MCF 10A (cell line): ENCODE measurements at regions of chr11 and their contacts with region 1.

Region 1: DNA sequence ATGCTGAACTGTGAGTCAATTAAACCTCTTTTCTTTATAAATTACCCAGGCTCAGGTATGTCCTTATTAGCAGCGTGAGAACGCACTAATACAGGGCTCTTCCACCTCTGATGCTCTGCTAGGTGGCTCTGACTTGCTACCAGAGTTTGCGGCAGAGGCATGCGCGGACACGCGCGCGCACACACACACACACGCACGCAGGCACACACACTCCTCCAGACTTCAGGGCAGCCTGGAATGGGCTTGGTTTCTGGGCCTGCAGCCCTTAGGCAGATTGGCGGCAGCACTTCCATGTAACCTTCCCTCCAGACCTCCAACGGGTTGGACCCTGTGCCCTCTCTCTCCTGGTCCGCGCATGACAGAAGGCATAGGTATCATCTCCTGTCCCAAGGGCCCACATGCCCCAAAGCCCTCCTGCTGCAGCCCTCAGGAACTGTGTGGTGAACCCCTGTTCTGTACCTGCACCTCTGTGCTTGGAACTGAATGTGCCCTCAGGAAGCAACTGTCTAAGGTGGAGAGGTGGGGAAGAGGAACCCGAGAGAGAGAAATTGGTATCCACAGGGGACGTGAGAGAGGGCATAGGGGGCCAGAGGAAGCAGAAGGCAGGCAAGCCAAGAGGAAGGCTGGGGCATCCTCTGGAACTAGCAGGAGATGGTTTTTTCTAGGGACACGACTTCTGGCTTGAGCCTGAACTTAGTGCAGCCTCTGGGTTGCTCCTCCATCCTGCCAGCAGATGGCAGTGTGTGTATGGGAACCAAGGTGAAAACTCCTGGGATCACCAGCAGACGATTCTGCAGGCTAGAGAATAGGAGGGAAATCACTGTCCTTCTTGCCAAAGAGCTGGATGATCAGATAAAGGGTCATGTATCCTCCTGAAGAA is 23.4 kb upstream of the RIC3 start:
- DNase-seq: peak; percentile 75
- H3K4me3 Mint-ChIP-seq: no peak overlapping the region
- H3K27ac Mint-ChIP-seq: no peak overlapping the region
- H3K4me1 Mint-ChIP-seq: no peaks in the 10 kb centered on the region
- H3K27me3 Mint-ChIP-seq: peaks cover 36% of the 10 kb centered on the region
- CTCF ChIP-seq: peak; percentile 84

Region 2: DNA sequence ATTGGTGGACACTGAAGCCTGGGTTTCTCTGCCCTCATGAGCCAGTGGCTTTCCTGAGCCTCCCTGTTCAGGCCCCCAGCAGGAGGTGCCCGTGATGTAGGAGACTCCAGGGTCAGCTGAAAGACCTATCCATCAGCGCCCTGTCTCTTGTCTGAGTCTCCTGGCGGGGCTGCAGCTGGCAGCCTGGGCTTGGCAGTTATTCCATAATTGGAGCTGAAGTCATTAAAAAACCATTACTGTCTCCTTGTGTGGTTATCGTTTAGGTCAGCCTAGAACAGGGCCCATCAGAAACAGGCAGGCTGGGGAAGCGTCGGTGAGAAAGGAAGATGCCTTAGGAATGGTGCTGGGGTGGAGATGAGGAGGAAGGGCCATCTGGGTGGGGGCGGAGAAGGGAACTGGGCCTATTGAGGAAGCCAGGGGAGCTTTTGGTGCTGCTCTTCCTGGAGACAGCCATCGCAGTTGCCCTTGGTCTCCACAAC is 106.2 kb before region 1 on chr11:
- CTCF ChIA-PET with region 1: no interaction called
- POLR2A ChIA-PET with region 1: no interaction called
- intact Hi-C with region 1: no loop called
- DNase-seq: no peak
- H3K4me3 Mint-ChIP-seq: no peak overlapping the region
- H3K27ac Mint-ChIP-seq: no peak overlapping the region
- H3K4me1 Mint-ChIP-seq: no peaks in the 10 kb centered on the region
- H3K27me3 Mint-ChIP-seq: peaks cover 10% of the 10 kb centered on the region
- CTCF ChIP-seq: no peak

Region 3: GRCh38 chr11:8178297-8178696 is 14.0 kb before region 1 on chr11:
- CTCF ChIA-PET with region 1: interaction called, 10 read pairs
- POLR2A ChIA-PET with region 1: interaction called, 3 read pairs
- intact Hi-C with region 1: no loop called
- DNase-seq: no peak
- H3K4me3 Mint-ChIP-seq: no peak overlapping the region
- H3K27ac Mint-ChIP-seq: no peak overlapping the region
- H3K4me1 Mint-ChIP-seq: no peaks in the 10 kb centered on the region
- H3K27me3 Mint-ChIP-seq: peaks cover 56% of the 10 kb centered on the region
- CTCF ChIP-seq: no peak

Region 4: GRCh38 chr11:8209208-8209807 is 17.1 kb after region 1 on chr11:
- CTCF ChIA-PET with region 1: interaction called, 101 read pairs
- POLR2A ChIA-PET with region 1: no interaction called
- intact Hi-C with region 1: no loop called
- DNase-seq: no peak
- H3K4me3 Mint-ChIP-seq: no peak overlapping the region
- H3K27ac Mint-ChIP-seq: no peak overlapping the region
- H3K4me1 Mint-ChIP-seq: no peaks in the 10 kb centered on the region
- H3K27me3 Mint-ChIP-seq: peaks cover 18% of the 10 kb centered on the region
- CTCF ChIP-seq: peak; percentile 36

Region 5: GRCh38 chr11:8219257-8220021 is 27.2 kb after region 1 on chr11:
- CTCF ChIA-PET with region 1: interaction called, 17 read pairs
- POLR2A ChIA-PET with region 1: no interaction called
- intact Hi-C with region 1: no loop called
- DNase-seq: peak; percentile 65
- H3K4me3 Mint-ChIP-seq: no peak overlapping the region
- H3K27ac Mint-ChIP-seq: no peak overlapping the region
- H3K4me1 Mint-ChIP-seq: no peaks in the 10 kb centered on the region
- H3K27me3 Mint-ChIP-seq: peaks cover 14% of the 10 kb centered on the region
- CTCF ChIP-seq: peak; percentile 72

Region 6: GRCh38 chr11:8225589-8226036 is 33.4 kb after region 1 on chr11:
- CTCF ChIA-PET with region 1: interaction called, 17 read pairs
- POLR2A ChIA-PET with region 1: no interaction called
- intact Hi-C with region 1: no loop called
- DNase-seq: peak; percentile 63
- H3K4me3 Mint-ChIP-seq: no peak overlapping the region
- H3K27ac Mint-ChIP-seq: no peak overlapping the region
- H3K4me1 Mint-ChIP-seq: peaks cover 20% of the 10 kb centered on the region
- H3K27me3 Mint-ChIP-seq: no peaks in the 10 kb centered on the region
- CTCF ChIP-seq: peak; percentile 94

Region 7: GRCh38 chr11:8566613-8567210 is 374.5 kb after region 1 on chr11:
- CTCF ChIA-PET with region 1: interaction called, 99 read pairs
- POLR2A ChIA-PET with region 1: no interaction called
- intact Hi-C with region 1: loop called (anchors 1 kb)
- DNase-seq: peak; percentile 59
- H3K4me3 Mint-ChIP-seq: no peak overlapping the region
- H3K27ac Mint-ChIP-seq: no peak overlapping the region
- H3K4me1 Mint-ChIP-seq: peaks cover 6% of the 10 kb centered on the region
- H3K27me3 Mint-ChIP-seq: peaks cover 38% of the 10 kb centered on the region
- CTCF ChIP-seq: peak; percentile 64

Region 8: GRCh38 chr11:8584511-8584910 is 392.3 kb after region 1 on chr11:
- CTCF ChIA-PET with region 1: interaction called, 10 read pairs
- POLR2A ChIA-PET with region 1: no interaction called
- intact Hi-C with region 1: no loop called
- DNase-seq: no peak
- H3K4me3 Mint-ChIP-seq: no peak overlapping the region
- H3K27ac Mint-ChIP-seq: no peak overlapping the region
- H3K4me1 Mint-ChIP-seq: peaks cover 10% of the 10 kb centered on the region
- H3K27me3 Mint-ChIP-seq: no peaks in the 10 kb centered on the region
- CTCF ChIP-seq: no peak